ENCODE measurements at regions of chr1 and their contacts with region 1.

Region 1: DNA sequence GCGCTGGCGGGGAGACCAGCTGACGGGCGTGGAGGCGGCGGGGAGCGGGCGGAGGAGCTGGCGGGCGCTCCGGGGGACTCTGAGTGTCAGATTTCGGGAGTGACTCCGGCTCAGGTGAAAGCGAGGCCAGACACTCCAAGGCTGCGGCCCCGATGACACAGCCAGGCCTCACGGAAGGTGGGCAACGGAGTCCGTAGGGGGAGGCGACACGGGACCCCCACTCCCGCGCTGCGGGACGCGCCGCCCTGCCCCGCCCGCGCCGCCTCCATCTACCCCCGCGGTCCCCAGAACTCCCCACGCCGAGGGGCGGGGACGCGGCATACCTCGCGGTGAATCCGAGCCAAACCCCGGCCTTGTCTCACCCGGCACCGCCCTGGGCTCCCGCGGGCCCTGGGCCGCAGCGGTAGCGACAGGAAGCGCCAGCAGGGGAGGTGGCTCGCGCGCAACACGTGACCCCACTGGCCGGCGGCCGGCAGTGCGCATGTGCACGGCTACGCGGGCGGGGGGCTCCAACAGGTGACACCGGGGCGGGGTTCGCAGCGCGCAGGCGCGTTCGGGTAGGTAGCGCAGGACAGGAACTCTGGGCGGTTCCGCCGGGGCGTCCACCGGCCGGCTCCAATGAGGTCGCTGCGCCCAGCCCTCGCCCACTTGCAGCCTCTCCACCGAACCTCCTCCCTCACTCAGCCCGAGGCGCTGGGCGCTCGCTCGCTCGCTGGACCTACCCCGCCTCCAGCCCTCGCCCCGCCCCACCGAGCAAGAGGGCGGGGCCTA is at the start of gene CC2D1B:
- DNase-seq: peak; percentile 100
- H3K4me3 Mint-ChIP-seq: peak within 1 kb of the TSS; percentile 94
- H3K27ac Mint-ChIP-seq: peak within 1 kb of the TSS; percentile 93
- H3K4me1 Mint-ChIP-seq: peaks cover 34% of the 10 kb centered on the region
- H3K27me3 Mint-ChIP-seq: no peaks in the 10 kb centered on the region
- total RNA-seq, gene CC2D1B: 36.0 and 38.1 TPM in 2 replicates

Region 2: DNA sequence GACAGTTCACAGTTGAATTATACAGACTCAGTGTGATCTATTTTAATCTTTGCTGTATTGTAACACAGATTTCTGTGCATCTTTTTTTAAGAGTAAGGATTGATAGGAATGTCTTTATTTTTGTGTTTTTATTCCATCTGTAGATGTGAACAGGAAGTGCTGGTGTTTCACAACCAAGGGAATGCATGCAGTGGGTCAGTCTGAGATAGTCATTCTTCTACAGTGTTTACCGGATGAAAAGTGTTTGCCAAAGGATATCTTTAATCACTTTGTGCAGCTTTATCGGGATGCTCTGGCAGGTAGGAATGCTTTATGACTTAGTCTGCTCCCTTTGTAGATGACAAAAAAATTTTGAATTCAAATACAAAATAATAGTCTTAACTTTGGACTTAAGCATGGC is 84.4 kb before region 1 on chr1:
- intact Hi-C with region 1: no loop called
- DNase-seq: no peak
- H3K4me3 Mint-ChIP-seq: no peak overlapping the region
- H3K27ac Mint-ChIP-seq: no peak overlapping the region
- H3K4me1 Mint-ChIP-seq: no peaks in the 10 kb centered on the region
- H3K27me3 Mint-ChIP-seq: no peaks in the 10 kb centered on the region

Region 3: GRCh38 chr1:52352690-52353089 is 13.2 kb before region 1 on chr1:
- intact Hi-C with region 1: no loop called
- DNase-seq: no peak
- H3K4me3 Mint-ChIP-seq: no peak overlapping the region
- H3K27ac Mint-ChIP-seq: no peak overlapping the region
- H3K4me1 Mint-ChIP-seq: no peaks in the 10 kb centered on the region
- H3K27me3 Mint-ChIP-seq: no peaks in the 10 kb centered on the region

Region 4: GRCh38 chr1:52697795-52698674 is 332.1 kb after region 1 on chr1 and contains the start of gene COA7:
- intact Hi-C with region 1: loop called (anchors 5 kb)
- DNase-seq: peak; percentile 62
- H3K4me3 Mint-ChIP-seq: peak within 1 kb of the TSS; percentile 93
- H3K27ac Mint-ChIP-seq: peak within 1 kb of the TSS; percentile 91
- H3K4me1 Mint-ChIP-seq: peaks cover 21% of the 10 kb centered on the region
- H3K27me3 Mint-ChIP-seq: no peaks in the 10 kb centered on the region
- total RNA-seq, gene COA7: 31.5 and 34.2 TPM in 2 replicates

Measured in activated T-helper 2 cell treated with anti-CD3 and anti-CD28 coated beads, Interferon-gamma antibody, Interleukin-2, Interleukin-4, amounts not matched to agents 10 μg/mL and 5 μg/mL and 100 μg/mL, durations not matched to agents 14 hours and 24 hours and 36 hours (primary cell).